Dorsolateral prefrontal cortex (tissue), 120 donors: ENCODE measurements at regions of chr2 and their contacts with region 1.

Region 1: DNA sequence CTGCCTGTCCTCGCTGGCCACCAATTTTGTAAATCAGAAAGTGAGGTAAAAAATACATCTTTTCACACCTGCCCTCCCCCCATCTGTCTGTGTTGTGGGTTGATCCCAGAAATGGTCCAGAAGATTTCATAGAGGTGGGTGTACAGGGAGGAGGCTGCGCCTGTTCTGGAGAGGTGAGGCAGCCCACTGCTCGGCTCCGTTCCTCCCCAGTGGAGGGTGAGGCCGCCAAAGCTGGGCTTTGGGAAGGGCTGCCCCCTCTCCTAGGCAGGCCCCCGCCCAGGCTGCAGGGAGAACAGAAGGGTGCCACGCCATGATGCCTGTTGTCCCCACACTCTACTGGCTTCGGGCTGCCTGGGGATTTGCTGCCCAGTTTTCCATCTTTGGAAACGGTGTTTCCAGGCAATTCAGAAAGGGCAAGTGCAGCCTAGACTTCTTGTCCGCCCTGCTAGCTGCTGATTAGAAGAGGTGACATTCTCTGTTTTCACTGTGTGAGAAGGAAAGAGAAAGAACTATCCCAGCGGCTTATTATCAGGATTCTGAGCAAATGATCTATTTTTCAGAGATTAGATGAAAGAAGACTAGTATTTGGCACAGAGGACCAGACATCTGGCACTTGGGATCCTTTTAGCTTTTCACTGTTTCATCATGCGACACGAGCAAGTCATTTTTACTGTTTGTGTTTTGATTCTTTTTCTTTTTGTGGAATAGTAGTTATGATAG is 18.7 kb downstream of the SMARCAL1 start:
- DNase-seq: peak in 6 of 10 donors; percentile 20 to 56 (median 46)
- H3K4me3 ChIP-seq: peak overlapping the region in 1 of 59 donors; percentile 9
- H3K27ac ChIP-seq: peak overlapping the region in 55 of 59 donors; percentile 11 to 86 (median 66)
- H3K27me3 ChIP-seq: no peaks in the 10 kb centered on the region
- CTCF ChIP-seq: no peak

Region 2: DNA sequence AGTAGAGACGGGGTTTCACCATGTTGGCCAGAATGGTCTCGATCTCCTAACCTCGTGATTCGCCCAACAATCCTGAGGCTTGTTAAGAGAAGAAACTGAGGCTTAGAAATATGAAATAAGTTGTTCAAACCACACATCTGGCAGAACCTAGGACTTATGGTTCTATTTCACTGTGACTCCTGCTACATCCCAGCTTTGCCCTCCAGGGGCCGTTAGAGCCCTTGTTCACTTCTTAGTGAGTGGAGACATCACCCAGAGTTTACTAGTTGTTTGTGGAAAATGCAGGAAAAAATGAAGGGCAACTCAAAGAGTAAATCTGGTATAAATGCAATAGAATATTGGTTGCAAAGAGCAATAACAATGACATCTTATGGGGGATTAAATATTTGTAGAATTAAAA is 102.6 kb before region 1 on chr2:
- intact Hi-C with region 1: no loop called
- DNase-seq: no peak
- H3K4me3 ChIP-seq: no peak overlapping the region
- H3K27ac ChIP-seq: no peak overlapping the region
- H3K27me3 ChIP-seq: no peaks in the 10 kb centered on the region
- CTCF ChIP-seq: no peak

Region 3: DNA sequence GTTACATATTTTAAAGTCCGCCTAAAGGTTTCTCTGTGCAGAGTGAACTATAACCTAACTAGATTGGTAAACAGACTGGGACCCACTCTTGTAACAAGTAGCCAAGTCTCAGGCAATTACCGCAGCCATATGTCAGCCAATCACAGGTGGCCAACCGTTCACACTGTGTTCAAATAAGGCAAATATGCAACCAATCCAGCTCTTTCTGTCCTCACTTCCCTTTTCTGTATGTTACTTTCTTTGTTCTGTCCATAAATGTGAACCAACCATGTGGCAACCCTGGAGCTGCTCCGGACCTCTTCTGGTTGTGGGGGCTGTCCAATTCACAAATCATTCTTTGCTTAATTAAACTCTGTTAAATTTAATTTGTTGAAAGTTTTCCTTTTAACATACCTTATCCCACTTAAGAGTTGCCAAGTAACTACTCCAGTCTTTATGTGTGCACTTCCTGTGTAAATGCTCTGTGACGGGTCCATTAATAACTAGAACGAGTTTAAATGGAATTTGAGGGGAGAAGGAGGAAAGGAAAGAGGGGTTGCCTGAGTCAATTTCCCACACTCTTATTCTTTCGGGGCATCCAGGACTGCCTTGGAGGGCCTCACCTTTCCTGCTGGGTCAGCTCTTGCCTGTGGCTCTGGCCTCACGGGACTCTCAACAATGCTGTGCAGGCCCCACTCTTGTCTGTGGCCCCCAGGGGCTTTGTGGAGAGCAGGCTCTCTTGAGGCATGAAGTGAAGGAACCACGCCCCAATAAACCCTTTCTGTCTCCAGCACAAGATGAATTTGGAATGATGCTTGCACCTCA is 61.0 kb after region 1 on chr2:
- intact Hi-C with region 1: loop called in 1 of 2 experiments (anchors 2 kb)
- DNase-seq: no peak
- H3K4me3 ChIP-seq: no peak overlapping the region
- H3K27ac ChIP-seq: peak overlapping the region in 29 of 59 donors; percentile 7 to 83 (median 61)
- H3K27me3 ChIP-seq: no peaks in the 10 kb centered on the region
- CTCF ChIP-seq: no peak